ENCODE measurements at regions of chr4 and their contacts with region 1.

Region 1: DNA sequence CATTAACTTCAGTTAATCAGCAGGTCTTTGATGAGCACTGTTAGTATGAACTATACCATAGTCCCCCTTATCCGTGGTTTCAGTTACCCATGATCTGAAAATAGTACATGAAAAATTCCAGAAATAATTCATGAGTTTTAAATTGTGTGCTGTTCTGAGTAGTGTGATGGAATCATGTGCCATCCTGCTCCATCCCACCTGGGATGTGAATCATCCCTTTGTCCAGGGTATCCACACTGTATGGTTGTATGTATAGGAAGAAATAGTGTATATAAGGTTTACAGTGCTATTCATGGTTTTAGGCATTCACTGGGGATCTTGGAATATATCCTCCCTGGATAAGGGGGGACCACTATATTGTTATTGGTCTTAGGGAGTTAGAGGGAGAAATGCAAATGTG is 24.5 kb downstream of the ARHGAP10 start:
- DNase-seq: no peak
- H3K4me3 ChIP-seq: no peak overlapping the region
- H3K27ac ChIP-seq: no peak overlapping the region
- H3K4me1 ChIP-seq: no peaks in the 10 kb centered on the region
- H3K27me3 ChIP-seq: no peaks in the 10 kb centered on the region
- CTCF ChIP-seq: no peak

Region 2: GRCh38 chr4:147407261-147408045 is 349.0 kb before region 1 on chr4:
- CTCF ChIA-PET with region 1: no interaction called
- POLR2A ChIA-PET with region 1: no interaction called
- intact Hi-C with region 1: no loop called
- DNase-seq: no peak
- H3K4me3 ChIP-seq: no peak overlapping the region
- H3K27ac ChIP-seq: no peak overlapping the region
- H3K4me1 ChIP-seq: no peaks in the 10 kb centered on the region
- H3K27me3 ChIP-seq: no peaks in the 10 kb centered on the region
- CTCF ChIP-seq: peak; percentile 57

Region 3: DNA sequence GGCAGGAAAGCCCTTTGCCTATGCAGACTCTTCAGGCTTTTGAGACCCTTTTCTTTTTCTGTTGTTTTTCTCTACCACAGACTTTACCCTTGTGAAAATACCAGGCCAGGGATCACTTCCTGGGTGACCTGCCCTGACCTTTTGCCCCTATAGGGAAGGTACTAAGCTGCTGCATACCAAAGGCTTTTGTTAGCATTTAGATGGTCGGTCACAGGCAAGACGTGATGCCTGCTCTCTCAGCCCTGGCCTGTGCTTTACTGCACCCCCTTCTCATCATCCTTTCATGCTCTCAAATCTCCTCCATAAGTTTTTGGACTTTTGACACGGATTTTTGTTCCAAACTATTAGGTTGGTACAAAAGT is 73.7 kb after region 1 on chr4:
- CTCF ChIA-PET with region 1: no interaction called
- POLR2A ChIA-PET with region 1: interaction called, 10 read pairs
- intact Hi-C with region 1: no loop called
- DNase-seq: no peak
- H3K4me3 ChIP-seq: no peak overlapping the region
- H3K27ac ChIP-seq: no peak overlapping the region
- H3K4me1 ChIP-seq: no peaks in the 10 kb centered on the region
- H3K27me3 ChIP-seq: no peaks in the 10 kb centered on the region
- CTCF ChIP-seq: no peak

Region 4: DNA sequence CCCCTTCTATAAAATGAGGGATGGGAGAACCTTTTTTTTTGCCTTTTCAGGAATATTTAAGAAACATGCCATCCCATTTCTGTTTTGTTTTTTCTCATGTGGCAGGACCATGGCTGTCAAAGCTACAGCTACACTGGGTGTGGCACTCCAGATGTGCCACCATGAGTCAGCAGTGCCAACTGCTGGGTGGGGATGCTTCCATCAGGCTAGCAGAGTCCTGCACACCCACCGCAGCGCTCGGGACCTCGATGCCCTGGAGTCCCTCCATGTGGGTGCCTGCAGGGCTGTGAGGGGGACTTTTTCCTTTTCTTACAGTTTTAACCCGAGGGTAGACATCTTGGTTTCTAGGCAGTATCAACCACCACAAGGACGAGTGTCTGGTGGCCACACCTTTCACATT is 333.2 kb after region 1 on chr4:
- CTCF ChIA-PET with region 1: no interaction called
- POLR2A ChIA-PET with region 1: no interaction called
- intact Hi-C with region 1: no loop called
- DNase-seq: no peak
- H3K4me3 ChIP-seq: no peak overlapping the region
- H3K27ac ChIP-seq: no peak overlapping the region
- H3K4me1 ChIP-seq: no peaks in the 10 kb centered on the region
- H3K27me3 ChIP-seq: no peaks in the 10 kb centered on the region
- CTCF ChIP-seq: no peak

Measured in A673 (cell line).